ENCODE measurements at regions of chr17 and their contacts with region 1.

Region 1: DNA sequence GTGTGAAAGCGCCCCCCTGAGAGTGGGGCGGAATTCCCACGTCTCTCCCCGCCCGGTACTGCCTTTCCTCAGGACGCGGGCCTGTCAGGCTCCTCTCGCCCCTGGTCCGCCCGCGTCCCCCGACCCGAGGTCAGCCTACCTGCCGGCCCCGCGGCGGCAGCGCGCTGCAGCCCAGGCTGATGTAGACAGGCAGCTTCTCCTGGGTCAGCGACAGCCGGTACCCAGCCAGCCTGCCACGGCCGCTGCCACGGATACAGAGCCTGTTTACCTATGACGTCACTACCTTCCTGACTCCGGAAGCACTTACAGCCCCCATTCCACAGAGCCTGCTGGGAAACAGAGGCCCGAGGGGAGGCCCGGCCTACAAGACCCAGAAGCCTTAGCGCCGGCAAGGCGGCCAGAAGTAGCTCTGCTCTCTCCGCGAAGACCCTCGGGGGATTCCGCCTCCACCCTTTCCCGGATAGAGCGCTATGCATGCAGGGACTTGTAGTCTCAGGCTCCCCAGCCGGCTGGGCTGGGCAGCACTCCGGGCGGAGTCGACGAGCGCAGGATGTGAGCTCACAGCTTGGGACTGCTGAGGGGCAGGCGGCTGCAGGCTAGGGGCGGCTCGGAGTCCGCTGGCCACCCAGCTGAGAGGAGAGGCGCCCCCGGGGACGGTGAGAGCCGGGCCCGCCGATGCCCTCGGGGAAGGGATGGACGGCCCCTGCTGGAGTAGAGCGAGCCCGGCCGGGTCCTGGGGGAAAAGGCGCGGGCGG is at the starts of genes IFT20 and TNFAIP1:
- DNase-seq: peak; percentile 92 to 100 (median 96)
- ATAC-seq: peak; percentile 95
- H3K4me3 ChIP-seq: peak within 1 kb of the TSS; percentile 92
- H3K4me3 Mint-ChIP-seq: peak within 1 kb of the TSS; percentile 98
- H3K27ac ChIP-seq: peak within 1 kb of the TSS; percentile 87 to 91
- H3K27ac Mint-ChIP-seq: peak within 1 kb of the TSS; percentile 88
- H3K4me1 ChIP-seq: peaks cover 38% of the 10 kb centered on the region
- H3K4me1 Mint-ChIP-seq: peaks cover 56% of the 10 kb centered on the region
- H3K27me3 ChIP-seq: no peaks in the 10 kb centered on the region
- H3K27me3 Mint-ChIP-seq: no peaks in the 10 kb centered on the region
- CTCF ChIP-seq: no peak
- total RNA-seq, gene IFT20: 52.6 to 53.1 TPM
- total RNA-seq, gene TNFAIP1: 9.5 to 12.1 TPM

Region 2: GRCh38 chr17:28318759-28319660 is 16.4 kb before region 1 on chr17 and contains the start of gene TMEM97:
- CTCF ChIA-PET with region 1: interaction called, 15 read pairs
- POLR2A ChIA-PET with region 1: interaction called, 28 read pairs
- intact Hi-C with region 1: loop called (anchors 1 kb)
- DNase-seq: peak; percentile 84 to 97 (median 92)
- ATAC-seq: peak; percentile 98
- H3K4me3 ChIP-seq: peak within 1 kb of the TSS; percentile 73
- H3K4me3 Mint-ChIP-seq: peak within 1 kb of the TSS; percentile 96
- H3K27ac ChIP-seq: no peak within 1 kb of the TSS
- H3K27ac Mint-ChIP-seq: peak within 1 kb of the TSS; percentile 79
- H3K4me1 ChIP-seq: peaks cover 20% of the 10 kb centered on the region
- H3K4me1 Mint-ChIP-seq: peaks cover 24% of the 10 kb centered on the region
- H3K27me3 ChIP-seq: no peaks in the 10 kb centered on the region
- H3K27me3 Mint-ChIP-seq: no peaks in the 10 kb centered on the region
- CTCF ChIP-seq: no peak
- total RNA-seq, gene TMEM97: 2.6 to 3.7 TPM

Region 3: GRCh38 chr17:28371245-28372202 is 36.1 kb after region 1 on chr17 and contains the start of gene SARM1:
- CTCF ChIA-PET with region 1: no interaction called
- POLR2A ChIA-PET with region 1: interaction called, 14 read pairs
- intact Hi-C with region 1: loop called in 1 of 2 experiments (anchors 1 kb)
- DNase-seq: peak; percentile 53 to 92 (median 74)
- ATAC-seq: peak; percentile 85
- H3K4me3 ChIP-seq: peak within 1 kb of the TSS; percentile 83
- H3K4me3 Mint-ChIP-seq: peak within 1 kb of the TSS; percentile 98
- H3K27ac ChIP-seq: peak within 1 kb of the TSS; percentile 59 to 91
- H3K27ac Mint-ChIP-seq: peak within 1 kb of the TSS; percentile 75
- H3K4me1 ChIP-seq: peaks cover 22% of the 10 kb centered on the region
- H3K4me1 Mint-ChIP-seq: peaks cover 26% of the 10 kb centered on the region
- H3K27me3 ChIP-seq: no peaks in the 10 kb centered on the region
- H3K27me3 Mint-ChIP-seq: no peaks in the 10 kb centered on the region
- CTCF ChIP-seq: no peak
- total RNA-seq, gene SARM1: 12.5 to 15.4 TPM

Region 4: GRCh38 chr17:28717578-28718333 is 382.4 kb after region 1 on chr17 and contains the start of gene RAB34:
- CTCF ChIA-PET with region 1: no interaction called
- POLR2A ChIA-PET with region 1: interaction called, 11 read pairs
- intact Hi-C with region 1: no loop called
- DNase-seq: peak in 6 of 14 experiments; percentile 12 to 60 (median 43)
- ATAC-seq: no peak
- H3K4me3 ChIP-seq: peak within 1 kb of the TSS; percentile 36
- H3K4me3 Mint-ChIP-seq: peak within 1 kb of the TSS; percentile 79
- H3K27ac ChIP-seq: no peak within 1 kb of the TSS
- H3K27ac Mint-ChIP-seq: peak within 1 kb of the TSS; percentile 79
- H3K4me1 ChIP-seq: peaks cover 55% of the 10 kb centered on the region
- H3K4me1 Mint-ChIP-seq: peaks cover 41% of the 10 kb centered on the region
- H3K27me3 ChIP-seq: peaks cover 17 to 21% of the 10 kb centered on the region in 2 experiments
- H3K27me3 Mint-ChIP-seq: peaks cover 35% of the 10 kb centered on the region
- CTCF ChIP-seq: no peak
- total RNA-seq, gene RAB34: 20.7 to 21.3 TPM

Measured in CD4-positive, alpha-beta T cell (primary cell).